GM12878 (cell line): ENCODE measurements at regions of chr19 and their contacts with region 1.

Region 1: GRCh38 chr19:54023191-54023590 is 31.8 kb downstream of the CACNG6 start:
- DNase-seq: no peak
- ATAC-seq: no peak
- H3K4me3 ChIP-seq: no peak overlapping the region
- H3K27ac ChIP-seq: no peak overlapping the region
- H3K4me1 ChIP-seq: no peaks in the 10 kb centered on the region
- H3K27me3 ChIP-seq: no peaks in the 10 kb centered on the region
- CTCF ChIP-seq: no peak
- EP300 ChIP-seq: no peak
- POLR2A ChIP-seq: no peak
- RAD21 ChIP-seq: no peak

Region 2: DNA sequence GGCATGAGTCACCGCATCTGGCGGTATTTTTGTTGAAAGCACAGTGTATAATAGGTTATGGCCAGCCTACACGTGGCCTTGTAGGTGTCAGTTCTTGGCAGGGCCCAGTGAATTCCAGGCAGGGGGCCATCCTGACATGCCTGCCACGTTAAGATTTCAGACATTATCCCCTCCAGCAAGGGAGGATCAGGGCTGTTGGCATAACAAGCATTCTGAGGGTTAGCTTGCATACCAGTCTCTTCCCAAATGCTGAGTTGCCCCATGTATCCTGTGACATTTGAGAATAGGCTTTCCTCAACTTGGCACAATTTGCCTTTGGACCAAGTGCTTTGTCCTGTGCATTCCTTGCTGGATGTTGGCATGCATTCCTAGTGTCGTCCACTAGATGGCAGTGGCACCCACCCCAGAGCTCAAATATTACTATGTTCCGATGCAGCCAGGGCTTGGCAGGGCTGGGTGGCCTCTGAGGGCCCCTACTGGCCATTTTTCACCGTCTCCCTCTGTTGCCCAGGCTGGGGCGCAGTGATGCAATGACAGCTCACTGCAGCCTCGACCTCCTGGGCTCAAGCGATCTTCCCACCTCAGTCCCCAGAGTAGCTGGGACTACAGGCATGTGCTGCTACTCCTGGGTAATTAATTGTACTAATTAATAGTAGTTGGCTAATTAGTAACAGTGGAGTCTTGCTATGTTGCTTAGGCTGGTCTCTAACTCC is 230.3 kb before region 1 on chr19:
- CTCF ChIA-PET with region 1: interaction called, 13 read pairs
- POLR2A ChIA-PET with region 1: no interaction called
- RAD21 ChIA-PET with region 1: interaction called, 3 read pairs
- SMC1A ChIA-PET with region 1: interaction called, 3 read pairs
- in situ Hi-C with region 1: no loop called
- intact Hi-C with region 1: no loop called
- DNase-seq: peak; percentile 7
- ATAC-seq: peak; percentile 87
- H3K4me3 ChIP-seq: no peak overlapping the region
- H3K27ac ChIP-seq: no peak overlapping the region
- H3K4me1 ChIP-seq: no peaks in the 10 kb centered on the region
- H3K27me3 ChIP-seq: no peaks in the 10 kb centered on the region
- CTCF ChIP-seq: peak; percentile 74 to 81 (median 76)
- EP300 ChIP-seq: no peak
- POLR2A ChIP-seq: no peak
- RAD21 ChIP-seq: peak; percentile 61

Region 3: GRCh38 chr19:54081032-54081431 is 57.8 kb after region 1 on chr19 and contains the start of gene TARM1:
- CTCF ChIA-PET with region 1: no interaction called
- POLR2A ChIA-PET with region 1: no interaction called
- RAD21 ChIA-PET with region 1: no interaction called
- SMC1A ChIA-PET with region 1: no interaction called
- in situ Hi-C with region 1: no loop called
- intact Hi-C with region 1: no loop called
- DNase-seq: no peak
- ATAC-seq: no peak
- H3K4me3 ChIP-seq: no peak within 1 kb of the TSS
- H3K27ac ChIP-seq: no peak within 1 kb of the TSS
- H3K4me1 ChIP-seq: no peaks in the 10 kb centered on the region
- H3K27me3 ChIP-seq: no peaks in the 10 kb centered on the region
- CTCF ChIP-seq: no peak
- EP300 ChIP-seq: no peak
- POLR2A ChIP-seq: no peak
- RAD21 ChIP-seq: no peak
- polyA plus RNA-seq, gene TARM1: not detected